ENCODE measurements at regions of chr12 and their contacts with region 1.

Region 1: DNA sequence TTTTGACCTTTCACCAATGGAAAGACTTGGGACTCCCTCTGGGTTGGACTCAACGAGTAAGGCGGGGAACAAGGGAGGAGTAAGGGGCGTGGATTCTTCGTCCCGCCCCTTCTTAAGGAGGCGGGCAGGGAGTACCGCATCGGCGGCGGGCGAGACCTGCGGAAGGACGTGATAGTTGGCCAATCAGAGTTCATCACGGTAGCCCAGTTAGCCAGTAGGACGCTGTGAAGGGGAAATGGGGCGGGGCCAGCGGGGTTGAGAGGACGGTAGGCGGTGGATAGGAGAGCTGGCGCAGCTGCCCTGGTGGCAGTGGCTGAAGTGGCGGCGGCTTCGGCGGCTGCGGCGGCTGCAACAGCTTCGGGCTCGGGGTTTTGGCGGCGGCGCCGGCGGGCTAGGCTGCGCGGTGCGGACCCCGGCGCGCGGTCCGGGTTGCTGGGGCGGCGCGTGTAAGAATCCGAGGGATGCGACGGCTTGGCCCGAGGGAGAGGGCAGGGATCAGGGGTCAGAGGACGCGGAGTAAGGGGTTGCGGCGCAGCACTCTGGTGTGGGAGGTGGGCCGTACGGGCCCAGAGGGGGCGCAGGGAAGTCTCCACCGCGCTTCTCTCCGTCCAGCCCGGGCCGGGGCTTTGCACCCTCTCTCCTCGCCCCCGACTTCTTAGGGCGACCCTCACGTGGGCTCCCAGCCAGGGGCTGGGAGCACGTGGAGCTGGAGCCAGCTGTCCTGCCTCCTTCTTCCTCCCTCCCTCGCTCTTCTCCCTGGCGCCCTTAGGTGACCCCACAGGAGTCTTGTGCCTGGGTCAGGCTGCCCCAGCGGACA is at the start of gene TPCN1:
- DNase-seq: peak; percentile 99 to 100
- ATAC-seq: peak; percentile 94 to 98 (median 96)
- H3K4me3 ChIP-seq: peak within 1 kb of the TSS; percentile 73 to 97 (median 92)
- H3K27ac ChIP-seq: peak within 1 kb of the TSS; percentile 88 to 99 (median 96)
- H3K4me1 ChIP-seq: peaks cover 8 to 61% (median 41%) of the 10 kb centered on the region in 9 donors
- H3K27me3 ChIP-seq: no peaks in the 10 kb centered on the region
- CTCF ChIP-seq: peak in 2 of 9 donors; percentile 6 to 11
- total RNA-seq, gene TPCN1: 81.9 to 163 (median 127) TPM

Region 2: GRCh38 chr12:113184900-113185773 is 36.3 kb before region 1 on chr12 and contains the starts of genes DDX54 and RITA1:
- intact Hi-C with region 1: loop called in 2 of 10 experiments (anchors 2 to 5 kb)
- DNase-seq: peak; percentile 88
- ATAC-seq: peak; percentile 90 to 96 (median 92)
- H3K4me3 ChIP-seq: peak within 1 kb of the TSS; percentile 77 to 100 (median 92)
- H3K27ac ChIP-seq: peak within 1 kb of the TSS; percentile 89 to 99 (median 96)
- H3K4me1 ChIP-seq: peaks cover 3 to 37% (median 27%) of the 10 kb centered on the region in 9 donors
- H3K27me3 ChIP-seq: no peaks in the 10 kb centered on the region
- CTCF ChIP-seq: no peak
- total RNA-seq, gene DDX54: 33.3 to 46.5 (median 37.5) TPM
- total RNA-seq, gene RITA1: 11.9 to 20.8 (median 14.4) TPM

Region 3: GRCh38 chr12:113261847-113262470 is 40.6 kb after region 1 on chr12:
- intact Hi-C with region 1: loop called in 3 of 10 experiments (anchors 1 to 5 kb)
- DNase-seq: no peak
- ATAC-seq: no peak
- H3K4me3 ChIP-seq: no peak overlapping the region
- H3K27ac ChIP-seq: peak overlapping the region in 8 of 10 donors; percentile 19 to 86 (median 77)
- H3K4me1 ChIP-seq: peaks cover 15 to 54% (median 49%) of the 10 kb centered on the region in 9 donors
- H3K27me3 ChIP-seq: no peaks in the 10 kb centered on the region
- CTCF ChIP-seq: no peak

Region 4: GRCh38 chr12:113299619-113300237 is 78.3 kb after region 1 on chr12:
- intact Hi-C with region 1: loop called in 1 of 10 experiments (anchors 2 kb)
- DNase-seq: peak; percentile 41 to 70
- ATAC-seq: peak; percentile 25 to 76 (median 56)
- H3K4me3 ChIP-seq: no peak overlapping the region
- H3K27ac ChIP-seq: peak overlapping the region; percentile 72 to 90 (median 82)
- H3K4me1 ChIP-seq: peaks cover 5 to 51% (median 33%) of the 10 kb centered on the region in 9 donors
- H3K27me3 ChIP-seq: no peaks in the 10 kb centered on the region
- CTCF ChIP-seq: no peak